ENCODE measurements at regions of chr7 and their contacts with region 1.

Region 1: GRCh38 chr7:35624299-35625186 is 70.4 kb downstream of the HERPUD2 start:
- DNase-seq: peak; percentile 29 to 64
- H3K4me3 ChIP-seq: no peak overlapping the region
- H3K27ac ChIP-seq: no peak overlapping the region
- H3K4me1 ChIP-seq: peaks cover 0 to 2% (median 0%) of the 10 kb centered on the region in 4 experiments; a peak in 3 of 7 replicates
- H3K27me3 ChIP-seq: no peaks in the 10 kb centered on the region
- CTCF ChIP-seq: peak; percentile 50 to 86 (median 84)
- EP300 ChIP-seq: no peak
- POLR2A ChIP-seq: no peak
- RAD21 ChIP-seq: peak; percentile 95 to 97

Region 2: DNA sequence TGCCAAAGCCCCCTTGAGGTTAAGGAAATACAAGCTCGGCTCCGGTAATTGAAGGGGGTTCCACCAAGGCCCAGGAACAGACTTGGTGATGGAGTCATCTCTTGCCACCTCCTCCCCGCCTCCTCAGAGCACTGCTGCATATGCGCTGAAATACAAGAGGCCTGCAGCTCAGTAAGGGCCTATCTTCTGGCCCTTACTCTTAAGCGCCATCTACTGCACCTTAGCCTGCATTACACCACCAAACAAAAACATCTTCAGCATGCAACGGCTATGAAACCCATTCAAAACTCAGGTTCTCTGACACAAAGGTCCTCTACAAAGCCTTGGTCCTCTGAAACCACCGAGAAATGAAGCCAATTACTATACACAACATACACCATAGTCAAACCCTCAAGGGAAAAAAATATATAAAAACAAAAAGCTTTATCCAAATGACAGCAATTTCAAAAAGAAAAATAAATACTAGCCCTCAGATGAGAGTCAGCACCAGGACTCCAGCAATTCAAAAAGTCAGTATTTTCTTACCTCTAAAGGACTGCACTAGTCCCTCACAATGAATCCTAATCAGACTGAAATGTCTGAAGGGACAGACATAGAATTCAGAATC is 193.9 kb before region 1 on chr7:
- CTCF ChIA-PET with region 1: interaction called, 14 read pairs
- POLR2A ChIA-PET with region 1: no interaction called
- DNase-seq: peak in 1 of 2 experiments; percentile 59
- H3K4me3 ChIP-seq: no peak overlapping the region
- H3K27ac ChIP-seq: no peak overlapping the region
- H3K4me1 ChIP-seq: no peaks in the 10 kb centered on the region
- H3K27me3 ChIP-seq: no peaks in the 10 kb centered on the region
- CTCF ChIP-seq: peak in 2 of 3 experiments; percentile 82 to 87; a peak in 3 of 4 replicates
- EP300 ChIP-seq: no peak
- POLR2A ChIP-seq: no peak
- RAD21 ChIP-seq: peak; percentile 83 to 89

Region 3: DNA sequence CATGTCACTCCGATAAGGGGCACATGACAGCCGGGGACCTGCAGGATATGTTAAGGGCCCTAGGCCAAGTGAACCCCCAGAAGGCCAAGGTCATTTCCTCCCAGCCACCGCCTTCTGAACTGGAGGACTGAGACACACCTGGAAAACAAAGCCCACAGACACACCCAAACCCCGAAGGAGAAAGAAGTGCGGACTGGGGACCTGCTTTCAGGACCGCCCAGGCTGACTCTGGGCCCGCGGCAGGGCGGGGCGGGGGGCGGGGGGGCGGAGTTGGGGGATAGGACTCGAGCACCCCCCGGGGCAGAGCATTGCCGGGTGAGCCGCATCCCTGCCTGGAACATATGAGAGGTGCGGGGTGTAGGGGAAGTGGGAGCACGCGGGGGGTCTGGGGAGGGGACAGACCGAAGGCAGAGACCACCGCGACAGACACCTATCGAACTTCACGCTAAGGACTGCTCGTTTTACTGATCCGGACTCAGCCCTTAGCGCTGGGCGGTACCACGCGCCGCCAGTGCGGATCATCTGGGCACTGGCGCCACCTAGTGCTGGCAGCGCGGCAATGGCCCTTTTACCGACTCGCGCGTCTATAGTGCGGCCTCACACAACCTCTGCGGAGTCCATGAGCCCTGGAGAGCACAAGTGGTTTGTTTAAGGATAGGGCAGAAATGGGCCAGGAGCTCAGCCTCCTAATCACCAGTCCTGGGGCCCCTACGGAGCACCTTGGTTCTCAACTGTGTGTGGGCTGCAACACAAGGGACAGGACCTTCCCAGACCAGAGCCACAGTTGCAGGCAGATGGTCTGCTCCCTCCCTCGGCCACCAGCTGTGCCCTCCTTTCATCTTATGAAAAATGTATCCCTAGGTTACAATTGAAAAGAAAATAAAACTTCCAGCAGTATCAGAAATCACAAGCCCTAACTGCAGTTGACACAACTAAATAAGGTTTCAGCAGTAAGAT is 87.2 kb before region 1 on chr7:
- CTCF ChIA-PET with region 1: interaction called, 11 read pairs
- POLR2A ChIA-PET with region 1: no interaction called
- DNase-seq: peak; percentile 54 to 92
- H3K4me3 ChIP-seq: peak overlapping the region in 3 of 4 experiments; percentile 34 to 57 (median 42); a peak in 4 of 8 replicates
- H3K27ac ChIP-seq: no peak overlapping the region
- H3K4me1 ChIP-seq: no peaks in the 10 kb centered on the region
- H3K27me3 ChIP-seq: peaks cover 0 to 14% (median 8%) of the 10 kb centered on the region in 4 experiments; a peak in 4 of 7 replicates
- CTCF ChIP-seq: peak; percentile 90 to 98 (median 93)
- EP300 ChIP-seq: no peak
- POLR2A ChIP-seq: no peak
- RAD21 ChIP-seq: peak; percentile 94 to 95

Region 4: GRCh38 chr7:35555934-35556333 is 68.6 kb before region 1 on chr7:
- CTCF ChIA-PET with region 1: interaction called, 11 read pairs
- POLR2A ChIA-PET with region 1: no interaction called
- DNase-seq: no peak
- H3K4me3 ChIP-seq: no peak overlapping the region
- H3K27ac ChIP-seq: no peak overlapping the region
- H3K4me1 ChIP-seq: 0 out of 7 replicates have a peak, but pooled peaks cover 0 to 2% (median 0%) of the 10 kb centered on the region in 4 experiments
- H3K27me3 ChIP-seq: no peaks in the 10 kb centered on the region
- CTCF ChIP-seq: no peak
- EP300 ChIP-seq: no peak
- POLR2A ChIP-seq: no peak
- RAD21 ChIP-seq: no peak

Region 5: GRCh38 chr7:35605760-35606159 is 18.8 kb before region 1 on chr7:
- CTCF ChIA-PET with region 1: interaction called, 46 read pairs
- POLR2A ChIA-PET with region 1: no interaction called
- DNase-seq: no peak
- H3K4me3 ChIP-seq: no peak overlapping the region
- H3K27ac ChIP-seq: no peak overlapping the region
- H3K4me1 ChIP-seq: no peaks in the 10 kb centered on the region
- H3K27me3 ChIP-seq: no peaks in the 10 kb centered on the region
- CTCF ChIP-seq: no peak
- EP300 ChIP-seq: no peak
- POLR2A ChIP-seq: no peak
- RAD21 ChIP-seq: no peak

Region 6: GRCh38 chr7:35702541-35702940 is 78.0 kb after region 1 on chr7:
- CTCF ChIA-PET with region 1: no interaction called
- POLR2A ChIA-PET with region 1: no interaction called
- DNase-seq: no peak
- H3K4me3 ChIP-seq: no peak overlapping the region
- H3K27ac ChIP-seq: no peak overlapping the region
- H3K4me1 ChIP-seq: no peaks in the 10 kb centered on the region
- H3K27me3 ChIP-seq: no peaks in the 10 kb centered on the region
- CTCF ChIP-seq: no peak
- EP300 ChIP-seq: no peak
- POLR2A ChIP-seq: no peak
- RAD21 ChIP-seq: no peak

Measured in H1 (cell line).